Activated naive CD8-positive, alpha-beta T cell treated with anti-CD3 and anti-CD28 coated beads, Interleukin-2, amount 10 ng/mL, durations not matched to agents 7 days and 5 days (primary cell): ENCODE measurements at regions of chr10 and their contacts with region 1.

Region 1: DNA sequence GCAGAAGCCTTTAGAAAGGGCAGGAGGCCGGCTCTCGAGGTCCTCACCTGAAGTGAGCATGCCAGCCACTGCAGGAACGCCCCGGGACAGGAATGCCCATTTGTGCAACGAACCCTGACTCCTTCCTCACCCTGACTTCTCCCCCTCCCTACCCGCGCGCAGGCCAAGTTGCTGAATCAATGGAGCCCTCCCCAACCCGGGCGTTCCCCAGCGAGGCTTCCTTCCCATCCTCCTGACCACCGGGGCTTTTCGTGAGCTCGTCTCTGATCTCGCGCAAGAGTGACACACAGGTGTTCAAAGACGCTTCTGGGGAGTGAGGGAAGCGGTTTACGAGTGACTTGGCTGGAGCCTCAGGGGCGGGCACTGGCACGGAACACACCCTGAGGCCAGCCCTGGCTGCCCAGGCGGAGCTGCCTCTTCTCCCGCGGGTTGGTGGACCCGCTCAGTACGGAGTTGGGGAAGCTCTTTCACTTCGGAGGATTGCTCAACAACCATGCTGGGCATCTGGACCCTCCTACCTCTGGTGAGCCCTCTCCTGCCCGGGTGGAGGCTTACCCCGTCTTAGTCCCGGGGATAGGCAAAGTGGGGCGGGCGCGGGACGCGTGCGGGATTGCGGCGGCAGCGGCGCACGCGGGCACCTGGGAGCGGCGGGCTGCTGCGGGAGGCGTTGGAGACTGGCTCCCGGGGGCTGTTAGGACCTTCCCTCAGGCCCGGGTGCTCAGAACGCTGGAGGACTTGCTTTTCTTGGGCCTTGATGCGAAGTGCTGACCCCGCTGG is at the start of gene FAS:
- DNase-seq: peak; percentile 79
- ATAC-seq: peak; percentile 81
- H3K4me3 Mint-ChIP-seq: peak within 1 kb of the TSS; percentile 100
- H3K27ac Mint-ChIP-seq: peak within 1 kb of the TSS; percentile 99
- H3K4me1 Mint-ChIP-seq: peaks cover 56% of the 10 kb centered on the region
- H3K27me3 Mint-ChIP-seq: no peaks in the 10 kb centered on the region
- total RNA-seq, gene FAS: 47.2 to 54.1 TPM

Region 2: GRCh38 chr10:88315755-88316154 is 674.8 kb before region 1 on chr10:
- POLR2A ChIA-PET with region 1: no interaction called
- DNase-seq: no peak
- ATAC-seq: no peak
- H3K4me3 Mint-ChIP-seq: no peak overlapping the region
- H3K27ac Mint-ChIP-seq: no peak overlapping the region
- H3K4me1 Mint-ChIP-seq: no peaks in the 10 kb centered on the region
- H3K27me3 Mint-ChIP-seq: no peaks in the 10 kb centered on the region

Region 3: DNA sequence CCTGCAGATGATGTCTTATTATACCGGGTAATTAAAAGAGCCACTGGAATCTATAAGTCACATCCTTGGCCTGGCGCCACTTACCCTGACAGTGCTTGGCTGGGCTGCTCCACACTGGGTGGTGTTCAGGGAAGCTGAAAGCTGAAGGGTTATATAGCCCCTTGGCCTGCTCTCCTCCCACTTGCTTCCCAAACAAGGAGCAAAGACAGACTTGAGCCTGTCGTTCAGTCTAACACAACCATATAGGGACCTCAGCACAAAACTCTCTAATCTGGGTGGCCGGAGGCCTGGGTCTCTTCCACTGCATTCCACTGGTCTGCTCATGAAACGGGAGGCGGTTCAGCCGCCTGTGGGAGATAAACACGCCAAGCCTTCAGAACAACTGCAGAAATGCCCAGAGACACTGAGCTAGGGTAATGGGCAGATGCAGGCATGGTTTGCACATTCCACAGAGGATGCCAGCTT is 37.9 kb before region 1 on chr10 and contains the start of gene ACTA2:
- POLR2A ChIA-PET with region 1: no interaction called
- DNase-seq: no peak
- ATAC-seq: no peak
- H3K4me3 Mint-ChIP-seq: no peak within 1 kb of the TSS
- H3K27ac Mint-ChIP-seq: no peak within 1 kb of the TSS
- H3K4me1 Mint-ChIP-seq: peaks cover 7% of the 10 kb centered on the region
- H3K27me3 Mint-ChIP-seq: peaks cover 2% of the 10 kb centered on the region
- total RNA-seq, gene ACTA2: 11.0 to 13.8 TPM

Region 4: GRCh38 chr10:88974446-88975376 is 15.9 kb before region 1 on chr10:
- POLR2A ChIA-PET with region 1: interaction called, 39 read pairs
- DNase-seq: no peak
- ATAC-seq: peak; percentile 76
- H3K4me3 Mint-ChIP-seq: peak overlapping the region; percentile 99
- H3K27ac Mint-ChIP-seq: peak overlapping the region; percentile 99
- H3K4me1 Mint-ChIP-seq: peaks cover 21% of the 10 kb centered on the region
- H3K27me3 Mint-ChIP-seq: peaks cover 3% of the 10 kb centered on the region

Region 5: DNA sequence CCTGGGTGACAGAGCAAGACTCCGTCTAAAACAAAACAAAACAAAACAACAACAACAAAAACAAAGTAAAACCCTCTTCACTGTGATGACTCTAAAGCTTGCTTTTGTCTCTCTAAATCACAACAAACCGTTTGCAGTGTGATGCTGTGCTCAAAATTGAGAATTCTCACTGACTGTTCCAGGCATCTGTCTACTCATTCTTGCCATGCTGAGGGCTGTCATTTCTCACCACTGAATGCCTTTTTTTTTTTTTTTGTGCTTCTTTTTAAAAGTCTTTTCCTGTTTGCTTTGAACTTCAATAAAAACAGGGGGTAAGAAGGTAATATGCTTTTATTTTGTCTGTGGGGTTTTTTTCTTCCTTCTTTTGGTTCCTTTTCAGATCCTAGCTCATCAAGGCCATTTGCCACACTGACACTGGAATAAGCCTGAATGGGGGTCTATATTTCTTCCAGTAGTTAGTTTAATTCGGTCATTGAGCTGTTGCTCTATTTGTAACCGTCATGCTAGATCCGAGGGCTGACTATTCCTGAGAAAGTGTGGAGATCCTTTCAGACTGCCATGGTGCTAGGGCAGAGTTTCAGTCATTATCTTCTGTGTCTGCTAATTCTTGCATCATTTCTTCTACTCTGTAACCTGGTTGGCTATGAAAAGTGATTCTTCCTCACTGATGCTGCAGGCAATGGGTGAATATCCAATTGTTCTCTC is 10.6 kb after region 1 on chr10:
- POLR2A ChIA-PET with region 1: interaction called, 35 read pairs
- DNase-seq: no peak
- ATAC-seq: peak; percentile 78
- H3K4me3 Mint-ChIP-seq: peak overlapping the region; percentile 47
- H3K27ac Mint-ChIP-seq: peak overlapping the region; percentile 35
- H3K4me1 Mint-ChIP-seq: peaks cover 47% of the 10 kb centered on the region
- H3K27me3 Mint-ChIP-seq: no peaks in the 10 kb centered on the region

Region 6: DNA sequence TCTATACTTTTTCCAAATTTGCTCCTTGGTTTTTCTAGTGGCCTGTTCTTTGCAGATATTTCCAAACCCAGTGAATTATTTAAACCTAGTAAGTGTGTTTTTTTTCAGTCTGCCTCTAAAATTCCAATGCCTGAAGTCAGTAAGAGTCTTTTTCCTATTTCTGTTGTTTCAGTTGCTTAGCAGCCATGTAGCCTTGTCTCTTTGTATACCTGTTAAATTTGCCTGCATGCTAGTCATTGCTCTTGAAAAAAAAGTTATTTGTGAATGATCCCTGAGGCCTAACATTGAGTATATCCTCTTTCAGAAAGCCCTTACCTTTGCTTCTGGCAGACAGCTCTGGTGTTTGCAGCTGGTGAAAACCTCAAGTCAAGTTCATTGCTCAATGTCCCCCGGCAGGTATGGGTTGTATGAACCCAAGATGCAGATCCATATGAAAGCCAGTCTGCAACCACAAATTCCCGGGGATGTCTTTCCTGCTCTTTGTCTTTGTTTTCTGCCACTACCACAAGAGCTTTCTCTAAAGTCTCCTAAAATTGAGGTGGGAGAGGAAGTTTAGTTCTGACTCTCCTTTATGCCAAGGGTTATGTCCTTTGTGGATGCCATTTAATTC is 180.8 kb after region 1 on chr10:
- POLR2A ChIA-PET with region 1: no interaction called
- DNase-seq: no peak
- ATAC-seq: no peak
- H3K4me3 Mint-ChIP-seq: no peak overlapping the region
- H3K27ac Mint-ChIP-seq: no peak overlapping the region
- H3K4me1 Mint-ChIP-seq: peaks cover 4% of the 10 kb centered on the region
- H3K27me3 Mint-ChIP-seq: peaks cover 48% of the 10 kb centered on the region